Sigmoid colon (tissue), 7 donors: ENCODE measurements at regions of chr4 and their contacts with region 1.

Region 1: GRCh38 chr4:88659055-88659889 is 38.4 kb downstream of the NAP1L5 start:
- DNase-seq: peak; percentile 70
- H3K4me3 ChIP-seq: no peak overlapping the region
- H3K27ac ChIP-seq: peak overlapping the region; percentile 38 to 61 (median 58)
- H3K4me1 ChIP-seq: peaks cover 0 to 25% (median 17%) of the 10 kb centered on the region in 4 donors
- H3K27me3 ChIP-seq: no peaks in the 10 kb centered on the region
- CTCF ChIP-seq: peak; percentile 50 to 83 (median 76)
- EP300 ChIP-seq: no peak
- POLR2A ChIP-seq: no peak

Region 2: GRCh38 chr4:88535090-88535755 is 124.0 kb before region 1 on chr4:
- intact Hi-C with region 1: loop called (anchors 2 kb)
- DNase-seq: no peak
- H3K4me3 ChIP-seq: no peak overlapping the region
- H3K27ac ChIP-seq: no peak overlapping the region
- H3K4me1 ChIP-seq: peaks cover 0 to 7% (median 0%) of the 10 kb centered on the region in 4 donors
- H3K27me3 ChIP-seq: no peaks in the 10 kb centered on the region
- CTCF ChIP-seq: no peak
- EP300 ChIP-seq: no peak
- POLR2A ChIP-seq: no peak